ENCODE measurements at regions of chr11 and their contacts with region 1.

Region 1: GRCh38 chr11:58579192-58580129 is 598 bp downstream of the ZFP91 start:
- DNase-seq: peak; percentile 95
- H3K4me3 Mint-ChIP-seq: peak overlapping the region; percentile 100
- H3K27ac Mint-ChIP-seq: peak overlapping the region; percentile 99
- H3K4me1 Mint-ChIP-seq: peaks cover 53% of the 10 kb centered on the region
- H3K27me3 Mint-ChIP-seq: no peaks in the 10 kb centered on the region

Region 2: DNA sequence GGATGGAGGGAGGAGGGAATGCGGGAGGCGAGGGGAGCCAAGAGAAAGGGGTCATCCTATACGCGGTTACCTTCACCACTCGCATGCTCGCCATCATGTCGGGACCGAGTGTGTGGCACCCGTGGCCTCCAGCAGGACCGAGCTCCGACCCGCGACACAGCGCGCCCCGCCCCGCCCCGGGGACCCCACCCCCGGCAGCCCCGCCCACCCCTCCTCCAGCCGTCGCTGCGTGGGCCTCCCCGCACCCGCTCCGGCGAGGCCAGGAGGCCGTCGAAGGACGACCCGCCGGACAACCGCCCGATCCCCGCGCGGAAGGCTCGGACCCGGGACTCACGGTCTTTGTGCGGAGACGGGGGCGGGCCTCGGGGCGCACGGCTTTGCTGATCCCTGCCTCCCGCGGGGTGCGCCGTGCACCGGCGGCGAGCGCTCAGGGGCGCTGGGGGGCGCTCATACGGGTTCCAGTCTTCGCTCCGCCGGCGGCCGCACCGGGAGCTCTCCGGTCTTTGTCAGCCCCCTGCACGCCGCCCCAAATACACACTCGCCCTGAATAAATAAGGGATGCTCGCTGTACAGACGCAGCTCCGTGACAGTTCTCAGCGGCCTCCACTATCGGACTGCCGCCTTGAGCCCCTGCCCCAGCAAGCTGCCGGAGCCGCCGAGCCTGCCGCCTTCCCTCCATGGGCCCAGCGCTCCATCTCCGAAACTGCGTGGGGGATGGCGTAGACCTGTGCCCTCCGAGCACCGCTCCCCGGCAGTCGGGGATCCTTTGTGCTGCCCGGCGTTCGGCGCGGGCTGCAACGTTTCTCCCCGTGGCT is 1011.7 kb before region 1 on chr11 and contains the start of gene UBE2L6:
- CTCF ChIA-PET with region 1: no interaction called
- intact Hi-C with region 1: loop called (anchors 2 kb)
- DNase-seq: peak; percentile 66
- H3K4me3 Mint-ChIP-seq: peak within 1 kb of the TSS; percentile 97
- H3K27ac Mint-ChIP-seq: peak within 1 kb of the TSS; percentile 96
- H3K4me1 Mint-ChIP-seq: peaks cover 39% of the 10 kb centered on the region
- H3K27me3 Mint-ChIP-seq: no peaks in the 10 kb centered on the region
- total RNA-seq, gene UBE2L6: 187 to 194 TPM

Region 3: DNA sequence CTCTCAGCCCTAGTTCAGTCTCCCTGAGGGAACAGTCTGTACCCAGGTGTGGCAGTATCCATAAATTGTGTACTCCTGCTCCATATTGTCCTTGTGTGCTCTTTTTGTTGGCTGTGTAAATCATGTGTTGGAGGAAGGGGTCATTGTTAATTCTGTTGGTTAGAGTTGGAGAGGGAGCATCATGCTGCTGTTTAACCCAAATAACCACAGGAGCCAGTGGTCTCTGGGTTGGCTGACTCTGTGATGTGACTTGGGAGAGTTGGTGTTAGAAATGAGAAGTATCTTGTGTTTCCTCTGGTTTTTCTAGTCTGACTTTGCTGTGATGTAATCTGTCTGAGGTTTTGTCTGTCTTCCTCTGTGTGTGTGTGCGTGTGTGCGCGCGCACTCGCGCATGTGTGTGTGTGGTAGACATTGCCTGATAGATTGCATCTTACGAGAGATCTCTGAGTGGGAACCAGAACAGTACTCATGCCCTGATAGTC is 787.4 kb before region 1 on chr11:
- CTCF ChIA-PET with region 1: no interaction called
- intact Hi-C with region 1: loop called (anchors 2 kb)
- DNase-seq: peak; percentile 87
- H3K4me3 Mint-ChIP-seq: peak overlapping the region; percentile 59
- H3K27ac Mint-ChIP-seq: peak overlapping the region; percentile 94
- H3K4me1 Mint-ChIP-seq: peaks cover 34% of the 10 kb centered on the region
- H3K27me3 Mint-ChIP-seq: no peaks in the 10 kb centered on the region

Region 4: GRCh38 chr11:58629857-58630256 is 50.4 kb after region 1 on chr11:
- CTCF ChIA-PET with region 1: interaction called, 48 read pairs
- intact Hi-C with region 1: loop called (anchors 1 kb)
- DNase-seq: peak; percentile 51
- H3K4me3 Mint-ChIP-seq: no peak overlapping the region
- H3K27ac Mint-ChIP-seq: no peak overlapping the region
- H3K4me1 Mint-ChIP-seq: peaks cover 7% of the 10 kb centered on the region
- H3K27me3 Mint-ChIP-seq: no peaks in the 10 kb centered on the region

Region 5: DNA sequence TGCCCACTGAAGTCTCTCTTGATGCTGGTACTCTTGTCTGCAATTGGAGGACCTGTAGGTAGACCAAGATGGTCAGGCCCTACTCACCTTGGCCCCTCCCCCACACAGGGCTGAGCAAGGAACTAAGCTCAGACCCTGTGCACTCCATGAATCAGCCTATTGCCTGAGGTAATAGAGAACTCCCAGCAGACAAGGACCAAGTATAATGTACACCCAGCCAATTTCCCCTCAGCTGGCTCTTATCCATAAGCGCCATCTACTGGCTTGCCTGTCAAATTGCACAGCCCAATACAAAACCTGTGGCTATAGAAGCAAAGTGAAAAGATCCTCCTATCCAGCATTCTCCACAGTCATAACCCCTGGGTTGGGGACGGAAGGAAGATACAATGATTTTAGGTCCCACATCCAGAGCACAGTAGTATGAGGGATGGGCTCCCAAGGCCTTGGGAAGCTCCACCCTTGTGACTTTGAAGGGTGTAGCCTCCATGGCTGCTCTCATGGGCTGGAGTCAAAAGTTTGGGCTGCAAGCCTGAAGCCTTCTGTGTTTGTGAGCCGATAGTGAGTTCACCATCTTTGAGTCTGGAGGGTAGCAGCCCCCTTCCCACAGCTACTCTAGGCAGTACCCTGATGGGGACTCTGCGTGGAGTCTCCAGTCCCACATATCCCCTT is 209.0 kb after region 1 on chr11:
- CTCF ChIA-PET with region 1: interaction called, 8 read pairs
- intact Hi-C with region 1: loop called (anchors 1 kb)
- DNase-seq: peak; percentile 66
- H3K4me3 Mint-ChIP-seq: no peak overlapping the region
- H3K27ac Mint-ChIP-seq: no peak overlapping the region
- H3K4me1 Mint-ChIP-seq: no peaks in the 10 kb centered on the region
- H3K27me3 Mint-ChIP-seq: peaks cover 5% of the 10 kb centered on the region

Region 6: DNA sequence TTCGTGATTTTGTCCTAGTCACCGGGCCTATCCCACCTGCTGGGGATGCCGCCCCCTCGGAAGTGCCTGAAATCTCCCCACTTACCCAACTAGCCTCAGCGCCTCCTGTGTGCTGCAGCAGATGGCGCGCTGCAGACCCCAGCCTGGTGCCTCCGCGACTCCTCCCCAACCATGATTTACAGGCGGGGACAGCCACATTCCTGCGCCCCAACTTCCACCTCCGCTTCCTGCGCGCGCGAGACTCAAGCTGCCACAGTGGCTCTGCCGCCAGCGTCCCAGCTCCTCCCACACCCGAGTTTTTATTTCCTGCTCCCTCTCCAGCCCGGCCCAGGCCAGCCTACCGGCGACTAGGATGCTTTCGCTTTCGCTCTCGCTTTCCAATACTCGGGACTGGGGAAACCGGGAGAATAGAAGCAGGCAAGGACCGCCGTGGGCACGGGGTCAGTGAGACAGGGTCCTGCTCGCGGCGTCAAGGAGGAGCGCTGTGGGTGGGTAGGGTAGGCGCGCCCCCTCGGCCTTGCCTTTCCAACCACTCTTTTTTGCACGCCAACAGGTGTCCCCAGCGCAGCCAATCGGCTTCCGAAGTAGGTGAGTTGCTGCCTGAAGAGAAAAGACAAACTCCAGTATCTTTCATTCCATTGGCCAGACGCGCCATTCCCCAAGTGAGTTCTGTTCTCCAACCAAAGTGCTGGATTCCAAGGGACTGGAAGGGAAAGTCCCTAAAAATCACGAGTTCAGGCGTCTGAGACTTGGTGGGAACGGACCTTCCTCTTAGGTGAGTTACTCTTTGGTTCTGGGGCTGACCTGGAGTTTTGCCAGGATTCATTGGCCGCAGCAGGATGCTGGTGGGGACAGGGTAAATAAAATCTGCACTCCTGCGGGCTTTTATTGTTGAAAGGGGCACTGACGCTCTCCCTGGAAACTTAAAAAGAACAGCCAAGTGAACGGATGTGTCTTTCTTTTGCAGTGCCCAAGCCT is 563.4 kb after region 1 on chr11 and contains the start of gene FAM111A:
- CTCF ChIA-PET with region 1: no interaction called
- intact Hi-C with region 1: loop called (anchors 1 kb)
- DNase-seq: peak; percentile 88
- H3K4me3 Mint-ChIP-seq: peak within 1 kb of the TSS; percentile 95
- H3K27ac Mint-ChIP-seq: peak within 1 kb of the TSS; percentile 91
- H3K4me1 Mint-ChIP-seq: peaks cover 40% of the 10 kb centered on the region
- H3K27me3 Mint-ChIP-seq: no peaks in the 10 kb centered on the region
- total RNA-seq, gene FAM111A: 98.3 to 99.4 TPM

Region 7: DNA sequence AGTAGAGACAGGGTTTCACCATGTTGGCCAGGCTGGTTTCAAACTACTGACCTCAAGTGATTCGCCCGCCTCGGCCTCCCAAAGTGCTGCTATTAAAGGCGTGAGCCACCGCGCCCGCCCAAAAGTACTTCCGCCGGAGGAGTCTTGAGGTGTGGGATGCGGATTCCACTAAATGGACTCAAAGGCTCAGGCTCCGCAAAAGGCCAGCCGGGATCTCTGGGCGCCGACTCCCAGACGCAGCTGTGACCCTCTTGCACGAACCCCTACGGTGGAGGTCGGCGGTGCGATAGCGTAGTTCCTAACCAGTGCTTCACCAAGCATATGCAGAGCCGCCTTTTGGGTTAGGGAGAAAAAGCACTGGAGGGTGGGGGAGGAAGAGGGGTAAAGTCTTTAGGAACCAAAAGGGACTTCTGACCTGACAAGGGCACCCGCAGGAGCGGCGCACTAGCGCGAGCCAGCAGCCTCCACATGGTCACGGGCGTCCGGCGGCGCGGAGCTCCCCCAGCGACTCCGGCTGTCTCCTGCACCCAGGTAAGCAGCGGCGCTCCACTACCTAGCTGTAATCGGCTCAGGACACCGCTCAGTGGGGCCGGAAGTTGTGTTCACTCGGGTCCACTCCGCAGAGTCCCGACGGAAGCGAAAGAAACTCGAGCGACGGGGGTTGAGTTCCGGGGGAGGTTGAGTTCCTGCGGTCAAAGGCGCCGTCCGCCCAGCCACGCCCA is 1230.9 kb after region 1 on chr11 and contains the start of gene MRPL16:
- CTCF ChIA-PET with region 1: no interaction called
- intact Hi-C with region 1: loop called (anchors 10 kb)
- DNase-seq: peak; percentile 92
- H3K4me3 Mint-ChIP-seq: peak within 1 kb of the TSS; percentile 87
- H3K27ac Mint-ChIP-seq: peak within 1 kb of the TSS; percentile 82
- H3K4me1 Mint-ChIP-seq: peaks cover 18% of the 10 kb centered on the region
- H3K27me3 Mint-ChIP-seq: no peaks in the 10 kb centered on the region
- total RNA-seq, gene MRPL16: 59.5 to 63.2 TPM

Measured in activated naive CD4-positive, alpha-beta T cell treated with anti-CD3 and anti-CD28 coated beads for 36 hours (primary cell).